ENCODE measurements at regions of chr20 and their contacts with region 1.

Region 1: GRCh38 chr20:42846784-42847490 is 342.8 kb downstream of the PTPRT start:
- DNase-seq: no peak
- ATAC-seq: no peak
- H3K4me3 Mint-ChIP-seq: no peak overlapping the region
- H3K27ac Mint-ChIP-seq: no peak overlapping the region
- H3K4me1 Mint-ChIP-seq: no peaks in the 10 kb centered on the region
- H3K27me3 Mint-ChIP-seq: no peaks in the 10 kb centered on the region

Region 2: GRCh38 chr20:42894475-42894874 is 47.5 kb after region 1 on chr20:
- CTCF ChIA-PET with region 1: no interaction called
- POLR2A ChIA-PET with region 1: no interaction called
- intact Hi-C with region 1: loop called in 1 of 2 experiments (anchors 1 kb)
- DNase-seq: no peak
- ATAC-seq: no peak
- H3K4me3 Mint-ChIP-seq: no peak overlapping the region
- H3K27ac Mint-ChIP-seq: no peak overlapping the region
- H3K4me1 Mint-ChIP-seq: no peaks in the 10 kb centered on the region
- H3K27me3 Mint-ChIP-seq: no peaks in the 10 kb centered on the region